ENCODE measurements at regions of chr3 and their contacts with region 1.

Region 1: DNA sequence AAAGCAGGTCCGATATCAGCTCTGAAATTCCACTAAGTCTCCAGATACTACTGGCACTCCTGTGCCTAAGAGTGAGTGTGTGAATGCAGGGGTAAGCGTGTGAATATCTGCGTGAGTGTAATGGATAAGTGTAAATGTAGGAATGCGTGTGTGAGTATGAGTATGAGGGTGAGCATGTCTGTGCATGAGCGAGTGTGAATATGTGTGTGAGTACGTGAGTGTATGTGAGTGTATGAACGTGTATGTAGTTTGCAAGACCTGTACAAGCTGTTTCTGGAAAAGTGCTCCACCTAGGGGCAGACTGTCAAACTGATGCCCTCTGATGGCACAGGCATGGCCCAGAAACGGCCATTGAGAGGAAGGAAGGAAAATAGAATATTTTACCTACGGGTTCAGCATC is 24.4 kb upstream of the FRMD4B start:
- DNase-seq: peak; percentile 81
- ATAC-seq: peak; percentile 94
- H3K4me3 Mint-ChIP-seq: no peak overlapping the region
- H3K27ac Mint-ChIP-seq: no peak overlapping the region
- H3K4me1 Mint-ChIP-seq: peaks cover 3% of the 10 kb centered on the region
- H3K27me3 Mint-ChIP-seq: peaks cover 12% of the 10 kb centered on the region

Region 2: GRCh38 chr3:69120879-69121464 is 289.3 kb before region 1 on chr3:
- CTCF ChIA-PET with region 1: interaction called, 15 read pairs
- POLR2A ChIA-PET with region 1: no interaction called
- DNase-seq: peak; percentile 90
- ATAC-seq: peak; percentile 72
- H3K4me3 Mint-ChIP-seq: no peak overlapping the region
- H3K27ac Mint-ChIP-seq: no peak overlapping the region
- H3K4me1 Mint-ChIP-seq: peaks cover 5% of the 10 kb centered on the region
- H3K27me3 Mint-ChIP-seq: peaks cover 2% of the 10 kb centered on the region

Region 3: DNA sequence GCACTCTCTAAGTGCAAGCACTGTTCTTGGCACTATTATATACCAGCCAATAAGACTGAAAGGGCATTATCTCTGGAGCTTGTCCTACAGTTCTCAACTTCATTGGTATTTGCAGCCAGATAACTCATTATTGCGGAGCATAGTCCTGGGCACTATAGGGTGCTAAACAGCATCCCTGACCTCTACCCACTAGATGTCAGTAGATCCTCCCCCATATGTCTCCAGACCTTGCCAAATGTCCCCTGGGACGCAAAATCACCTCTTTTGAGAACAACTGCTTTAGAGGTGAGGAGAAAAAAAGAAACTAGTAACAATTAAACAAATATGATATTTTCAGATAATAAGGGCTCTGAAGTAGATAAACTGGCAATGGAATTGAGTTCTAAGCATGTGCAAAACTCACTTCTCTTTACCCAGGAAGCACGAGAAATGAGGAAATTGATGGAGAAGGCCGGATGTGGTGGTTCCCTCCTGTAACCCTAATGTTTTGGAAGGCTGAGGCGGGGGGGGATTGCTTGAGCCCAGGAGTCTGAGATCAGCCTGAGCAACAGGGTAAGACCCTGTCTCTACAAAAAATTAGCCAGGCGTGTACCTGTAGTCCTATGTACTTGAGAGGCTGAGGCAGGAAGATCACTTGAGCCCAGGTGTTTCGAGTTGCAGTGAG is 85.8 kb before region 1 on chr3:
- CTCF ChIA-PET with region 1: interaction called, 59 read pairs
- POLR2A ChIA-PET with region 1: no interaction called
- DNase-seq: peak; percentile 33
- ATAC-seq: peak; percentile 24
- H3K4me3 Mint-ChIP-seq: no peak overlapping the region
- H3K27ac Mint-ChIP-seq: no peak overlapping the region
- H3K4me1 Mint-ChIP-seq: peaks cover 36% of the 10 kb centered on the region
- H3K27me3 Mint-ChIP-seq: no peaks in the 10 kb centered on the region

Region 4: DNA sequence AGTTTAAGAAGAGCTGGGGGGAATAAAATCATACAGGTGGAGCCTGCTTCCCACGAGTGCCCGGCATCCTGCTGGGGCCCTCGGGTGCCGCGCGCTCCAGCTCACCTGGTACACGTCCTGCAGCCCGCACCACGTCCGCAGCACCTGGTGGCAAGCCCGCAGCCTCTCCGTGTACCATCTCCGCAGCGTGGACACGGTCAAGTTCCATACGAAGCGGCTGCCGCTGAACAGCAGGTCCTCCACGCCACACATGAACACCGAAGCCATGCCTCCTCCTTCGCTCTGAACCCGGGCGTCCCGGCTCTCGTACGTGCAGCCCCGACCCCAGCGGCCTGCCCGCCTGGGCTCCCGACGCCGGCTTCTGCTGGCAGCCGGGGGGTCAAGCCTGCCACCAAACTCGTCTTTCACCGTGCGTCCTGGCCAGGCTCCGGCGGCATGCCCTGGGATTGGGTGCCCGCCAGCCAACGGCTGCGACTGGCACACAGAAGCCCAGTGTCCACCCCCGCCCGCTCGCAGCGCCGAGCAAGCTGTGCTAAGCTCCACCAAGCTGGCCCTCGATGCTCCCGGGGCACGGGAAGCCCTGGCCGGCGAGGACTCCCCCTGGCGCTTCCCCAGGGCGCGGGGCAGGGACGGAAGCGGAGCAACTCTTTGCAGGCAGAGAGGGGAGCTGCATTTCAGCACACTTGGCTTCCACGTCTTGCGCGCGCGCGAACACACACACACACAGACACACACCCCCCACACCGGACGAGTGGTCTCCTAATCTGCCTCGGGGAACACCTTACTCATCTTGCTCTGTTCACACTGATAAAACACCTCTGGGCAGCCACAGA is 24.3 kb before region 1 on chr3 and contains the start of gene FRMD4B:
- CTCF ChIA-PET with region 1: interaction called, 19 read pairs
- POLR2A ChIA-PET with region 1: no interaction called
- DNase-seq: peak; percentile 44
- ATAC-seq: peak; percentile 84
- H3K4me3 Mint-ChIP-seq: peak within 1 kb of the TSS; percentile 60
- H3K27ac Mint-ChIP-seq: no peak within 1 kb of the TSS
- H3K4me1 Mint-ChIP-seq: peaks cover 20% of the 10 kb centered on the region
- H3K27me3 Mint-ChIP-seq: peaks cover 63% of the 10 kb centered on the region
- total RNA-seq, gene FRMD4B: 7.7 to 8.2 TPM

Region 5: DNA sequence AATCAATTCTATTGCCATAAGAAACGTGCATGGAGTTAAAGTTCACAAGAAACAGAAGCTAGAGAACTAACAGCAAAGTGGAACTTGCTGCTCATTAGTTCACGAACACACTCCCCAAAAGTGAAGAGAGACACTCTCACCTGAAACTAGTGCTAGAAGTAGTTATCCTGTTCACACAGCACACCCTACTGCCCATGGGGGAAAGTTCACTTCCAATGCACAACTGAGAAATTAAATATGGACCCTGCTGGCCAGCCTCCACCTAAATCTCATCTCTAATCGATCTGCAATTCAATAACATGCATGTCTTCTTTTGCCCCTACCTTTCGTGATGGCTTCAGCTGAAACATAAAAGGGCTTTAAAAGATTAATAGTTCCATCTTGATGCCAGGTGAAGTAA is 15.0 kb after region 1 on chr3:
- CTCF ChIA-PET with region 1: interaction called, 17 read pairs
- POLR2A ChIA-PET with region 1: no interaction called
- DNase-seq: peak; percentile 53
- ATAC-seq: peak; percentile 64
- H3K4me3 Mint-ChIP-seq: no peak overlapping the region
- H3K27ac Mint-ChIP-seq: no peak overlapping the region
- H3K4me1 Mint-ChIP-seq: no peaks in the 10 kb centered on the region
- H3K27me3 Mint-ChIP-seq: peaks cover 10% of the 10 kb centered on the region

Measured in activated CD8-positive, alpha-beta T cell treated with anti-CD3 and anti-CD28 coated beads, Interleukin-2, amount 10 ng/mL, durations not matched to agents 7 days and 5 days (primary cell).